MCF 10A (cell line): ENCODE measurements at regions of chr21 and their contacts with region 1.

Region 1: GRCh38 chr21:36156339-36156814 is 247 bp upstream of the DOP1B start:
- DNase-seq: peak; percentile 99
- H3K4me3 Mint-ChIP-seq: peak overlapping the region; percentile 70
- H3K27ac Mint-ChIP-seq: no peak overlapping the region
- H3K4me1 Mint-ChIP-seq: peaks cover 11% of the 10 kb centered on the region
- H3K27me3 Mint-ChIP-seq: no peaks in the 10 kb centered on the region
- CTCF ChIP-seq: no peak

Region 2: DNA sequence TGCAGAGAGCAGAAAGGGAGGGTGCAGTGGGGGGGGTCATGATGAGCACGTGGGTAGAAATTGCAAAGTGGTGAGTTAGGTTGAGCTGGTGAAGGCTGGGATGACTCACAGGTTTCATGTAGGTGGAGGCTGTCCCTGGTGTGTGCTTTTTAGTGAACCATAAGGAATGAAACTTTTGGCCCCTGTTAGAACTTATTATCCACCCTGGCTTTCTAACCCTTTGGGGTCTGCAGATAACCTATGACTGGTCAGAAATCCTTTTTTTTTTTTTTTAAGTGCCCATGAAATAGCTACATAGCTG is 47.2 kb after region 1 on chr21:
- CTCF ChIA-PET with region 1: interaction called, 108 read pairs
- POLR2A ChIA-PET with region 1: interaction called, 21 read pairs
- intact Hi-C with region 1: no loop called
- DNase-seq: peak; percentile 85
- H3K4me3 Mint-ChIP-seq: no peak overlapping the region
- H3K27ac Mint-ChIP-seq: peak overlapping the region; percentile 41
- H3K4me1 Mint-ChIP-seq: peaks cover 19% of the 10 kb centered on the region
- H3K27me3 Mint-ChIP-seq: no peaks in the 10 kb centered on the region
- CTCF ChIP-seq: no peak

Region 3: GRCh38 chr21:36209626-36210171 is 53.3 kb after region 1 on chr21:
- CTCF ChIA-PET with region 1: interaction called, 108 read pairs
- POLR2A ChIA-PET with region 1: interaction called, 21 read pairs
- intact Hi-C with region 1: loop called (anchors 1 kb)
- DNase-seq: peak; percentile 86
- H3K4me3 Mint-ChIP-seq: peak overlapping the region; percentile 61
- H3K27ac Mint-ChIP-seq: peak overlapping the region; percentile 80
- H3K4me1 Mint-ChIP-seq: peaks cover 16% of the 10 kb centered on the region
- H3K27me3 Mint-ChIP-seq: no peaks in the 10 kb centered on the region
- CTCF ChIP-seq: peak; percentile 50

Region 4: DNA sequence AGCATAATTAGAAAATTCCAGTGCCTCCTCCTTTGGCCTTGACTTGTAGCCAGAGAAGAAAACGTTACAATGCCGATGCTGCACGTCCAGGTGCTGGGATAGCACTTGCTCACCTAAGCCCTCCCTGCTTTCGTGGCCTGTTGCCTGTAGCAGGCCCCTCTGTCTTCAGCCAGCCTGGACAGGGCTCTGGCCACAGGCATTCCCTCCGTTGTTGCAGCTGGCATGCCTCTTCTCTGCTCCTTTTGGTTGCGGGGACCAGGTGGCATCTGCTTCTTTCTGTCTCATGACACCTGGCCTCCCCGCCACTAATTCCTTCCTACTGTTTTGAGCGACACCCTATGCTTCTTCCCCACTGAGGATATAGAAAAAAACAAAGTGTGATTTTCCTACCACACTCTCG is 109.1 kb after region 1 on chr21:
- CTCF ChIA-PET with region 1: interaction called, 10 read pairs
- POLR2A ChIA-PET with region 1: no interaction called
- intact Hi-C with region 1: no loop called
- DNase-seq: no peak
- H3K4me3 Mint-ChIP-seq: no peak overlapping the region
- H3K27ac Mint-ChIP-seq: no peak overlapping the region
- H3K4me1 Mint-ChIP-seq: no peaks in the 10 kb centered on the region
- H3K27me3 Mint-ChIP-seq: no peaks in the 10 kb centered on the region
- CTCF ChIP-seq: no peak

Region 5: DNA sequence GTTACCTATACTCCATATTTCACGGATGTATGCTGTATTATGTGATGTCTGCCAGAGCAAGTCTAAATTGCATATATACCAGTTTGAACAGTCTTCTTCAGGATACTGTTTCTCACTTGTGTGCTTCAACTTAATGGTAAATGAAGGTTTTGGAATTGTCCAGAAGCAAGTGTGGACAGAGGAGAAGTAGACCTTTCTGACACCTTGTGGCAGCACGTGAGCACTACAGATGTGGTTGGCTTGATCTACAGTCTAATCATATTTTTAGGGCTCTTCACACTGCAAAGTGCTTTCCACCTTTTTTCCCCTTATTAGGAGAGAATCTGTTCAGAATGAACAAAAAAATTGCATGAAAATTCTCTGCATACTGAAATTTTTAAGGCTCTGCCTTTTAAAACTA is 174.5 kb after region 1 on chr21:
- CTCF ChIA-PET with region 1: interaction called, 39 read pairs
- POLR2A ChIA-PET with region 1: interaction called, 5 read pairs
- intact Hi-C with region 1: loop called (anchors 1 kb)
- DNase-seq: peak; percentile 67
- H3K4me3 Mint-ChIP-seq: no peak overlapping the region
- H3K27ac Mint-ChIP-seq: peak overlapping the region; percentile 54
- H3K4me1 Mint-ChIP-seq: peaks cover 10% of the 10 kb centered on the region
- H3K27me3 Mint-ChIP-seq: no peaks in the 10 kb centered on the region
- CTCF ChIP-seq: peak; percentile 57

Region 6: DNA sequence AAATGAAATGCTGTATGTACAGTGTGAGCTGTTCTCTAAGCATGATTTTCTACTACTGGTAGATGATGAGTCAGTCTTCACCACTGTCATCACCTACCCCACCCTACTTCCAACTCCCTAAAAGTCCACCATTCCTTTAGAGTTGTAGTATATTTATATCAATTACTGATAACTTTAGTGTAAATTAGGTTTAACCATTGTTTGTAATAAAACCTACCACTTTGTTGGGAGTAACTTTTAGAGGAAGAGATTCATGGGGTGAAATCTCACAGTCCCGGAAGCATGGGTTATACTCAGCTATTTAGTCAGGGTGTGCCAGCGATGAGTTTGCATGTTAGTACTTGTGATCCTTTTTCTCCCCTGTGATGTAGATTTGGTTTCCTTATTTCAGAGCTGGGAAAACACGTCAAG is 180.7 kb after region 1 on chr21:
- CTCF ChIA-PET with region 1: interaction called, 39 read pairs
- POLR2A ChIA-PET with region 1: interaction called, 6 read pairs
- intact Hi-C with region 1: no loop called
- DNase-seq: peak; percentile 76
- H3K4me3 Mint-ChIP-seq: peak overlapping the region; percentile 64
- H3K27ac Mint-ChIP-seq: peak overlapping the region; percentile 100
- H3K4me1 Mint-ChIP-seq: peaks cover 18% of the 10 kb centered on the region
- H3K27me3 Mint-ChIP-seq: no peaks in the 10 kb centered on the region
- CTCF ChIP-seq: no peak